GM10248 (cell line): ENCODE measurements at regions of chr6 and their contacts with region 1.

Region 1: DNA sequence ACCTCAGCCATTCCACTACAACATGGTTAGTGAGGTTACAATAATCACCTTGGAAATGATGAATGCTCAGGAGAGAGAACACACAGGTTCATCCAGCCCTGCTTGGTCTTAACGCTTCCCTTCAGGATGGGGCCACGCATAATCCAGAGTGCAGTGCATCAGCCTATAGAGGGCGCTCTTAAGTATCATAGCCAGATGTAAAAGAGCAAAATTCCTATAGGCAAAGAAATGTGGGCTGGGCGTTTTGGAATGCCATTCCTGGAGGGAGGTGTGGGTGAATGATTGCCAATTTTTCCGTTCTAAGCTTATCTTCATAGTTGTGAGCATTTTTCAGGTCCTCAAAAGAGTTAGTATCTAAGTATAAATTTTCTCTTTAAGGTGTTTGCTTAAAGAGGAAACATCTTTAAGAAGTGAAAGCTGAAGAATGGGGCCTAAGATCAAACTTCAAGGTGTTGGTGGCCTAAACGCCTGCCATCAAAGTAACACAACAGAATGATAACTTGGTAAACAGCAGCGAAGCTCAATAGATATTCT is 1.8 kb downstream of the RIPOR2 start:
- DNase-seq: no peak
- CTCF ChIP-seq: peak; percentile 88

Region 2: GRCh38 chr6:24689964-24690363 is 244.0 kb before region 1 on chr6:
- CTCF ChIA-PET with region 1: no interaction called
- POLR2A ChIA-PET with region 1: no interaction called
- DNase-seq: no peak
- CTCF ChIP-seq: no peak

Region 3: DNA sequence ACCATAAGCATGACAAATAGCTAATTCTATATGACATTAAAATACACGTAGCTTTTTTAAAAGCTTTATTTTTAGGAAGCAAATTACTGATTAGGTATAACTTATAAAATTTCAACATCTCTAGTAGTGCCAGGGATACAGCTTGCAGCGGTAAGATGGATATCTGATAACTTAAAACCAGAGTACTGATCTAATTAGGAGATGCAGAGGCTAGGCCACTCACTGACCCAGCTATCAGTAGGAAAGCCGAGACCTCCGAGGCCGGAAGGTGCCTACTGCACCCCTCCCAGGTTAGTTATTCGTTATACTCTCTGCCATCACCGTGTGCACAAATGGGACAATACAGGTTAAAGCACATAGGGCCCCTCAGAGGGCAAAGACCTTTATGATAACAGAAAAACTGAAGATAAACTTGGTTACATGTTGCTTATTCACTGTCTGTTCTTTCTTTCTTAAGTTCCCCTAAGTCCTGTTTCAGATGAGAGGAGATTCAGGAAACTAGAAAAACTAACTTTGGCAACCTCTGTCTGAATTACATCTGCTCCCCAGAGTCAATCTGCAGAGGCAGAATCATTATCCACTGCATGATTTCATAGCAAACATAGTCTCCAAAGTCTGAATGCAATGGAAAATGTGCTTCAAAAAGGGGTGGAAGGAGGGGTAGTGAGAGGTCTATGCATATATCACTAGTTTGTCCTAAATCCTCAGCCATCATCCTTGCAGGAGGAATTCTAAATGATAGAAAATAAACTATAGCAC is 59.0 kb before region 1 on chr6:
- CTCF ChIA-PET with region 1: interaction called, 12 read pairs
- POLR2A ChIA-PET with region 1: no interaction called
- DNase-seq: no peak
- CTCF ChIP-seq: no peak

Region 4: DNA sequence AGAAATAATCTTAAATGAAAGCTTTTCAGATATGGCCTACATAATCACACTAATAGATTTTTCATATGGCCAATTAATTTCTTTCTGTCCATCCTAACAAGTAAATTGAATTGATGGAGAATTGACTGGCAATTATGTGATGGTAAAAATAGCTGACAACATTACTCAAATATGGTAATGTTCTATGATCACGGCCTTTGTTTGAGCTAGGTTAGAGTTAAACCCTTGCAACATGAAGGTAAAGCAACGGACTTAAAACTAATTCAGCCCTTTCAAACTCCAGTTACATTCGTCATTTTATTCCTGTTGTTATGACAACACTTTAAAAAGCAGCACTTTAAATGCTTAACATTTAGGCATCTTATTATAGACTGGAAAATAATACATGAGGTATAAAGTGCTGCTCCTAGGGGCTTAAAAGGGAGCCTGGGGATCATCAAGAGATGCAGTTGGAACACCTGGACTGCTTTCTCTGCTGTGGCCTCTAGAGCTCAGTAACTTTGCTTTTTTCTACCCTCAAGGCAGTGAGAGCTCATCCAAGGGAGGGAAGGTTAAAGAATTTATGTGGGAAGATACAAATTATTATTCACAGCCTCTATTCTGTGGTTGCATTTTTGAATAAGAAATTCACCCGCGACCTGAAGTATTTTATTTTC is 45.1 kb before region 1 on chr6:
- CTCF ChIA-PET with region 1: interaction called, 28 read pairs
- POLR2A ChIA-PET with region 1: no interaction called
- DNase-seq: no peak
- CTCF ChIP-seq: no peak

Region 5: DNA sequence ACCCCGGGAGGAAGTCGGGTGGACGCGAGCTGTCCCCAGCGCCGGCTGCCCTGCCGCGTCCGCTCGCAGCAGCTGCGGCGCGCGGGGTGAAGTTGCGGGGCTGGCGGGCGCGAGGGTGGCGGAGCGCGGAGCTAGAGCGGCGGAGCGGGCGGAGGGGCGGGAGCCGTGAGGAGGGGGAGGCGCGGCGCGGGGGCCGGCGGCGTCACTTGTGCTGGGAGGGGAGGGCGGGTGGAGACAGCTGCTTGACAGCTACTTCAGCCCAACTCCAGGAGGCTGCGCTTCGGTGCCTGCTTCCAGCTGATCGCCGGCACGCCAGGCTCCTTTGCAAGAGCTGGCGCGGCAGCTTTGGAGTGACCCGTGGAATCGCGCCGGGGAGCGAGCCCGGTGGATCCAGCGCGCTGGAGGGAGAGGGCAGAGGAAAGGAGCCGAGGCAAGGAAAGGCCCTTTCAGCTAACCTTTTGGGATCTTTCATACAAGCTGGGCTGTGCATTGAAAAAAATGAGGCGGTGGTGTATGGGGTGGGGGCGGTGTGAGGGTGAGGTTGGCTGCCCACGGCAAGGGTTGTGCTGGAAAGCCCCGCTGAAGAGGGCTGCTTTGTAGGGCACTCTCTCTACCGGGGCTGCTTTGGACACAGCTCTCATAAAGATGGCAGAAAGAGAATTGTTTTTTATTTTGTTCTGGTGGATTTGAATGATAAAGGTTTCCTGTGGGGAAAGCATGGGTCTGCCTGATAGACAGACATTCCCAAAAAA is 22.8 kb before region 1 on chr6:
- CTCF ChIA-PET with region 1: interaction called, 94 read pairs
- POLR2A ChIA-PET with region 1: interaction called, 3 read pairs
- DNase-seq: peak; percentile 48
- CTCF ChIP-seq: no peak

Region 6: GRCh38 chr6:24949020-24949569 is 15.2 kb after region 1 on chr6:
- CTCF ChIA-PET with region 1: interaction called, 27 read pairs
- POLR2A ChIA-PET with region 1: no interaction called
- DNase-seq: peak; percentile 72
- CTCF ChIP-seq: no peak

Region 7: GRCh38 chr6:25006565-25007001 is 72.6 kb after region 1 on chr6:
- CTCF ChIA-PET with region 1: interaction called, 14 read pairs
- POLR2A ChIA-PET with region 1: no interaction called
- DNase-seq: peak; percentile 26
- CTCF ChIP-seq: no peak

Region 8: DNA sequence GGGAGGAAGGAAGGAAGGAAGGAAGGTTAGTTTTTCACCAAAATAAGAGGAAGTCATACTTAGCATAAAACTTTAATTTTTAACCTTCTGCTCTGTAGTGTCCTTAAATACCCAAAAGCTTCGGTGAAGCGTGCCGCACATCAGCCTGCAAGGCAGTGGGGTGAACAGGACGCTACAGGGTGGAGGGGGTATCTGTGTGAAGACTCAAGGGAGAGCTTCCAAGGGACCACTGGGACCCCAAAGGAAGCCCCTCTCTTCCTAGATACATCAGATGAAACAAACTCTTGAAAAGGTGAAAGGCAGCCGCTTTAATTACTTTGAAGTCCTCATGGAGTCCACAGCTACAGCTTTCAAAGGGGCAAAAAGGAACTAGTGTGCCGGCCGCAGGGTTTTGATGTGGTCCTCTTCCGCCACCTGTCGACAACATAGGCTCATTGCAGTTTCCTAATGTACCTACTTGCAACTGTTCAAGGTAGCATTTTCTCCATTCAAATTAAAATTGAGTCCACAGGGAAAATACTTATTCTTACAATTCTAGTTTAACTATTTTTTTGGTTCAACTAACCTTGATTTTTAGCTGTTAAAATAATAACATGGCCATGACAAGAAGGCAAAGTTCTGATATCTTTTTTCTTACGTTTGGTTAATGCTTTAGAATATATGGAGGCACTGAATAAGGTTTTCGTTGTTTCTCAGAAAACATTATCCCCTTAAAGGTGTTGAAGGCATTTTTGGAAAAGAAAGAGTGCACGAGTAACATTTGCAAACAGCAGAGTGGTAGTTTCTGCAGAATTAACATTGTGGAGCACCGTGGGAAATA is 136.8 kb after region 1 on chr6:
- CTCF ChIA-PET with region 1: interaction called, 11 read pairs
- POLR2A ChIA-PET with region 1: no interaction called
- DNase-seq: peak; percentile 69
- CTCF ChIP-seq: peak; percentile 78